K562 (cell line): ENCODE measurements at regions of chr11 and their contacts with region 1.

Region 1: DNA sequence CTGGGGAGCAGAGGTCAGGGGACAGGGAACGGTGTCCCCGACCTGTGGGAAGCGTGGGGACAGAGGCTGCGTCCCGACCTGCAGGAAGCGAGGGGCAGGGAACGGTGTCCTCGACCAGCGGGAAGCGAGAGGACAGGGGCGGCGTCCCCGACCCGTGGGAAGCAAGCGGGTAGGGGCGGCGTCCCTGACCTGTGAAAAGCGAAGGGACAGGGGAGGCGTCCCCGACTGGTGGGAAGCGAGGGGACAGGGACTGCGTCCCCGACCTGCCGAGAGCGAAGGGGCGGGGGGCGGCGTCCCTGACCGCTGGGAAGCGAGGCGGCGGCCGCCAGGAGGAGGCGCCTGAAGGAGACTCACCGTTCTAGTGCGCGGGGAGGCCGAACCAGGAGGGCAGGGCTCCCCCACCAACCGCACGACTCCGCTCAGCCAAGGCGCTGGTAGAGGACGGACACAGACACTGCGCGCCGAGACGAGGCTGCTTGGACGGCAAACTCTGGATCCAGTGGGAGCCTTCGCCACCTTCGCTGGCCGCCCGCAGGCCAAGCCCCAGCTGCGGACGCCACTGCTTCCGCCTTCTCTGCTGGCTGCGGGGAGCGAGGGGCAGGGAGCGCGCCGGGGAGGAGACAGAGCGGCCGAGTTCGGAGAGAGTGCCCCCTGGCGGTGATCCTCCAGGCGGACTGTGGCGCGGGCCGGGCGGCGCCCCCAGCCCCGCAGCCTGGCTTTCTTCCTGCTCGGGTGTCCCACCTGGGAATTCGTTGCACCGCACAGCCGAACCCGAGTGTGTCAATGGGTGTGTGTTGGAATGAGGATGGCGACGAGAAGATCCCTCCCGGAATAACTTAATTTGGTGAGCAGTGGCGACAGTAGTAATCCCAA is at the start of gene TRAF6:
- DNase-seq: peak; percentile 84 to 92 (median 86)
- ATAC-seq: peak; percentile 97
- H3K4me3 ChIP-seq: peak within 1 kb of the TSS; percentile 92
- H3K27ac ChIP-seq: peak within 1 kb of the TSS; percentile 92
- H3K4me1 ChIP-seq: peaks cover 0 to 4% of the 10 kb centered on the region in 2 experiments; a peak in 3 of 5 replicates
- H3K27me3 ChIP-seq: no peaks in the 10 kb centered on the region
- CTCF ChIP-seq: peak; percentile 80 to 92 (median 86)
- EP300 ChIP-seq: peak; percentile 42; the same call in 1 of the 2 replicates
- POLR2A ChIP-seq: peak; percentile 97
- RAD21 ChIP-seq: no peak; a peak in 2 of 4 replicates
- polyA plus RNA-seq, gene TRAF6: 2.0 to 4.2 TPM

Region 2: GRCh38 chr11:36622431-36623136 is 112.7 kb after region 1 on chr11:
- CTCF ChIA-PET with region 1: interaction called, 3 read pairs
- POLR2A ChIA-PET with region 1: no interaction called
- in situ Hi-C with region 1: no loop called
- intact Hi-C with region 1: loop called (anchors 10 kb)
- DNase-seq: peak; percentile 7 to 35 (median 16)
- ATAC-seq: peak; percentile 92
- H3K4me3 ChIP-seq: no peak overlapping the region
- H3K27ac ChIP-seq: no peak overlapping the region
- H3K4me1 ChIP-seq: peaks cover 0 to 17% of the 10 kb centered on the region in 2 experiments; a peak in 2 of 5 replicates
- H3K27me3 ChIP-seq: no peaks in the 10 kb centered on the region
- CTCF ChIP-seq: peak; percentile 37 to 88 (median 62); a peak in 5 of 6 replicates
- EP300 ChIP-seq: no peak
- POLR2A ChIP-seq: no peak
- RAD21 ChIP-seq: peak; percentile 94 to 97

Region 3: GRCh38 chr11:36672813-36673450 is 163.0 kb after region 1 on chr11:
- CTCF ChIA-PET with region 1: no interaction called
- POLR2A ChIA-PET with region 1: no interaction called
- in situ Hi-C with region 1: no loop called
- intact Hi-C with region 1: loop called (anchors 5 kb)
- DNase-seq: peak; percentile 11 to 55 (median 29)
- ATAC-seq: peak; percentile 42; the same call in 1 of the 3 replicates
- H3K4me3 ChIP-seq: no peak overlapping the region
- H3K27ac ChIP-seq: no peak overlapping the region
- H3K4me1 ChIP-seq: no peaks in the 10 kb centered on the region
- H3K27me3 ChIP-seq: no peaks in the 10 kb centered on the region
- CTCF ChIP-seq: peak in 2 of 3 experiments; percentile 50 to 59; a peak in 4 of 6 replicates
- EP300 ChIP-seq: no peak
- POLR2A ChIP-seq: no peak
- RAD21 ChIP-seq: peak; percentile 56 to 71